ENCODE measurements at regions of chr6 and their contacts with region 1.

Region 1: GRCh38 chr6:156686995-156687788 is 90.0 kb upstream of the ARID1B start:
- DNase-seq: peak; percentile 90 to 94 (median 91)
- H3K4me3 ChIP-seq: peak overlapping the region; percentile 79
- H3K27ac ChIP-seq: peak overlapping the region; percentile 88 to 97
- H3K4me1 ChIP-seq: no peaks in the 10 kb centered on the region
- H3K27me3 ChIP-seq: no peaks in the 10 kb centered on the region
- CTCF ChIP-seq: peak in 2 of 3 donors; percentile 5 to 7
- EP300 ChIP-seq: no peak
- POLR2A ChIP-seq: peak; percentile 73

Region 2: DNA sequence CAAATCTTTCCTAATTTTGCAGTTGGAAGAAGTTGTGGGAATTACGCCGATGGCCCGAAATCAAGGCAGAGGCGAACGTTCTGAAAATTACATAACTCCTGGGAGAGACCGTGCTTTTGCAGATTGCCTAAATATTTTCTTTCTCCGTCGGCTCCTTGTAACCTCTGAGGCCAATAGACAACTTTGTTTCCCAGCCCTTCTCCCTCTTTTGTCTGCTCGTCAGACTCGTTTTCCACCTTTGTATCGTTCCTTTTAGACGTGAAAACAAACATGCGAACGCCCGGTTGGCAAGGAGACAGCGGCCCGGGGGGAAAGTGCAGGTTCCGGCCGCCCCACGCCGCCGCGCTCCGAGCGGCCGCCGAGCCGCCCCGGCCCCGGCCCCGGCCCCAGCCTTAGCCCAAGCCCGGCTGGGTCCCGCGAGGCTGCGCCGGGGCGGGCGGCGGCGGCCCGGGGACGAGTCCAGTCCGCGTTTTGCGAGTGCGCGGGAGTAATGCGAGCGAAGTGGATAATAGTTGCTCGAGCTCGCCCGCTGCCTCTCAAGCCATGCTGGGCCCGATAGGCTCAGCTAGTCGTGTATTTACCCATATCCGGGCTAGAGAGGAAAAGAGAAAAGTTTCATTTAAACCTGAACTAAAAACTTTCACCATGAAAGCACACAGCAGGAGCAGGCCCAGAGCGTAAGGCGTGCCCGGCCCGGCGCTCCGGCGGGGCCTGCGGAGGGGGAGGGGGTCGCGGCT is 89.8 kb after region 1 on chr6 and contains the start of gene ARID1B:
- intact Hi-C with region 1: loop called in 3 of 4 experiments (anchors 2 kb)
- DNase-seq: peak; percentile 80 to 88 (median 82)
- H3K4me3 ChIP-seq: peak within 1 kb of the TSS; percentile 79
- H3K27ac ChIP-seq: peak within 1 kb of the TSS; percentile 96 to 100
- H3K4me1 ChIP-seq: peaks cover 2% of the 10 kb centered on the region
- H3K27me3 ChIP-seq: no peaks in the 10 kb centered on the region
- CTCF ChIP-seq: peak in 1 of 3 donors; percentile 11
- EP300 ChIP-seq: no peak
- POLR2A ChIP-seq: peak; percentile 38
- total RNA-seq, gene ARID1B: 96.3 to 144 (median 106) TPM

Region 3: DNA sequence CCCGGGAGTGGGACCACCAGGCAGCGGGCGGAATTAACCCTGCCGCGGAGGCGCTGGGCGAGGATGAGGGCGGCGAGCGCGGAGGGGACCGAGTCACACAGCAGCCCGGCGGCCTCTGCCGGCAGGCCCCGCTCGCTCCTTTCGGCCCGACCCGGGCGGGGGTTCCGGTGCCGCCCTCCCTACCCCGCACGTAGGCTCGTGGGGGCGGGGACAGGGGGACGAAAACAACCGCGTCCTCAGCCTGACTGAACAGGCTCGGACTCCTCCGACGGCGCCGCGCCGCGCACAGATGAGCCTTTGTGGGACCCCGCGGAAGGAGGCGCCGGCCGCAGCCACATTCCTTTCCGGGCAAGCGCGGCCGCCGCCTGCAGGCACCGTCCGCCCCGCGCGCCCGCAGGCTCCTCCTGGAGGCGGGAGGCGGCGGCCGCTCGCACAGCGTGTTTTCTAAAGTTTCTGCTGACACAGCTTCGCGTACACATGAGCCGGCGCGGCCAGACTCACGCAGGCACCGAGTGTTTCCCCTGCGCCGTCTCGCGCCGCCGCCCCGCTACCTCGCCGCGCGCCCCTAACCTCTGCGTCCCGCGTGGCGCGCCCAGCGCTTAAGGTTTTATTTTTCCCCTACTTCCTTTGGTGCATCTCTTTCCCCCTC is 334.3 kb after region 1 on chr6:
- intact Hi-C with region 1: loop called in 2 of 4 experiments (anchors 5 kb)
- DNase-seq: peak; percentile 90 to 93 (median 93)
- H3K4me3 ChIP-seq: peak overlapping the region; percentile 88
- H3K27ac ChIP-seq: peak overlapping the region; percentile 98 to 99
- H3K4me1 ChIP-seq: peaks cover 10% of the 10 kb centered on the region
- H3K27me3 ChIP-seq: no peaks in the 10 kb centered on the region
- CTCF ChIP-seq: peak in 2 of 3 donors; percentile 44 to 57
- EP300 ChIP-seq: no peak
- POLR2A ChIP-seq: peak; percentile 95

Region 4: GRCh38 chr6:157184202-157185020 is 497.2 kb after region 1 on chr6:
- intact Hi-C with region 1: loop called in 1 of 4 experiments (anchors 10 kb)
- DNase-seq: peak; percentile 62 to 84 (median 78)
- H3K4me3 ChIP-seq: no peak overlapping the region
- H3K27ac ChIP-seq: no peak overlapping the region
- H3K4me1 ChIP-seq: no peaks in the 10 kb centered on the region
- H3K27me3 ChIP-seq: no peaks in the 10 kb centered on the region
- CTCF ChIP-seq: peak; percentile 82 to 90 (median 82)
- EP300 ChIP-seq: no peak
- POLR2A ChIP-seq: no peak

Measured in ovary (tissue), 10 donors.